ENCODE measurements at regions of chrX and their contacts with region 1.

Region 1: DNA sequence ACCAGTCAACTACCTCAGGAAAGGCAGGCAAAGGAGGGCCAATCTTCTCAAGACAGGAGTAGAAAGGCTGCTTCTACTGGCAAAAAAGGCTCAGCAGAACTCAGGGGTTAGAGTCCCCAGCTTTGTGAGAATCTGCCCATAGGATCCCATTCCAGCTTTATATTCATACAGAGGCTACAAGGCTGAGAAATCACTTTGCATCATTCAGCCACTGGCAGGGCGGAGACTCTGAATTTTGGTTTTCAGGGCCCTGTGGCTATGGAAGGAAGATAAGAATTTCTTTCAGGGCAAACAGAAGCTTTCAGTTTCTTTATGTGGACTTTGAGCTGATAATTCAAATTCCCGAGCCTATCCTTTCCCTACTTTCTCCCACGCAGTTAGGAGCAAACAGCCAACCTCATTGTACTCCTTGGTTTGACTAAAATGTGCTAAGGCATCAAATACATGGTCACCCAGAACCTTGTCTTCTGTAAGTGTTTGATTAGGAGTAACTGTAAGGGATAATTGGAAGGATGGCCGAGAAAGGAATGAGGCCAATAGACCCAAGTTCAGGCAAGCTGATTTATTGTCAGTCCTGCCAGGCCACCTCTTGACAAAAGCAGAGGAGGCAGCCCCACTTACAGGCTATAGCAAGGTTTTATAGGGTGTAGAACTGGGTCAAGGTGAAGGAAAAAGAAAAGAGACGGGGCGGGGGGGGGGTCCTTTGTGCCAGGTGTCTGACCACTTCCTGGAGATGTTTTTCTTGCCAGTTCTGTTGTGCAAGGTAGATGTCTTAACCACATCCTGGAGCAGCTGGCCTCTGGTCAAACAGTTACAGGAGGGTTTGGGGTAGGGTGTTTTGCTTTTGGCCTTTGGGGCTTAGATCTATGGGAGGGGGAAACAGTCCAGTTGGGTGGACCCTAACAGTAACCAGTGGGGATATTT is 165.3 kb upstream of the PPP1R2C start:
- DNase-seq: peak; percentile 41
- ATAC-seq: peak; percentile 75
- H3K4me3 ChIP-seq: peak overlapping the region in 1 of 5 experiments; percentile 19
- H3K4me3 Mint-ChIP-seq: peak overlapping the region; percentile 52
- H3K27ac ChIP-seq: peak overlapping the region; percentile 79 to 89
- H3K27ac Mint-ChIP-seq: peak overlapping the region; percentile 99
- H3K4me1 ChIP-seq: peaks cover 65% of the 10 kb centered on the region in 2 donors
- H3K4me1 Mint-ChIP-seq: peaks cover 73% of the 10 kb centered on the region
- H3K27me3 ChIP-seq: no peaks in the 10 kb centered on the region
- H3K27me3 Mint-ChIP-seq: no peaks in the 10 kb centered on the region
- CTCF ChIP-seq: no peak

Region 2: GRCh38 chrX:41796577-41796976 is 1146.7 kb before region 1 on chrX:
- CTCF ChIA-PET with region 1: interaction called, 25 read pairs
- POLR2A ChIA-PET with region 1: interaction called, 3 read pairs
- intact Hi-C with region 1: loop called (anchors 2 kb)
- DNase-seq: no peak
- ATAC-seq: no peak
- H3K4me3 ChIP-seq: no peak overlapping the region
- H3K4me3 Mint-ChIP-seq: no peak overlapping the region
- H3K27ac ChIP-seq: no peak overlapping the region
- H3K27ac Mint-ChIP-seq: peak overlapping the region; percentile 60
- H3K4me1 ChIP-seq: peaks cover 19 to 20% of the 10 kb centered on the region in 2 donors
- H3K4me1 Mint-ChIP-seq: peaks cover 30% of the 10 kb centered on the region
- H3K27me3 ChIP-seq: no peaks in the 10 kb centered on the region
- H3K27me3 Mint-ChIP-seq: no peaks in the 10 kb centered on the region
- CTCF ChIP-seq: no peak

Region 3: GRCh38 chrX:41923257-41923969 is 1019.9 kb before region 1 on chrX and contains the start of gene CASK:
- CTCF ChIA-PET with region 1: interaction called, 3 read pairs
- POLR2A ChIA-PET with region 1: no interaction called
- intact Hi-C with region 1: loop called (anchors 5 kb)
- DNase-seq: peak; percentile 89
- ATAC-seq: peak; percentile 88
- H3K4me3 ChIP-seq: peak within 1 kb of the TSS; percentile 51 to 79 (median 64)
- H3K4me3 Mint-ChIP-seq: peak within 1 kb of the TSS; percentile 95
- H3K27ac ChIP-seq: peak within 1 kb of the TSS; percentile 12 to 38
- H3K27ac Mint-ChIP-seq: peak within 1 kb of the TSS; percentile 86
- H3K4me1 ChIP-seq: peaks cover 3 to 11% of the 10 kb centered on the region in 2 donors
- H3K4me1 Mint-ChIP-seq: peaks cover 26% of the 10 kb centered on the region
- H3K27me3 ChIP-seq: no peaks in the 10 kb centered on the region
- H3K27me3 Mint-ChIP-seq: no peaks in the 10 kb centered on the region
- CTCF ChIP-seq: no peak
- total RNA-seq, gene CASK: 50.4 and 60.4 TPM in 2 replicates

Region 4: GRCh38 chrX:42930951-42931350 is 12.4 kb before region 1 on chrX:
- CTCF ChIA-PET with region 1: no interaction called
- POLR2A ChIA-PET with region 1: no interaction called
- intact Hi-C with region 1: no loop called
- DNase-seq: no peak
- ATAC-seq: no peak
- H3K4me3 ChIP-seq: no peak overlapping the region
- H3K4me3 Mint-ChIP-seq: no peak overlapping the region
- H3K27ac ChIP-seq: no peak overlapping the region
- H3K27ac Mint-ChIP-seq: no peak overlapping the region
- H3K4me1 ChIP-seq: peaks cover 24 to 28% of the 10 kb centered on the region in 2 donors
- H3K4me1 Mint-ChIP-seq: peaks cover 39% of the 10 kb centered on the region
- H3K27me3 ChIP-seq: no peaks in the 10 kb centered on the region
- H3K27me3 Mint-ChIP-seq: no peaks in the 10 kb centered on the region
- CTCF ChIP-seq: no peak

Region 5: DNA sequence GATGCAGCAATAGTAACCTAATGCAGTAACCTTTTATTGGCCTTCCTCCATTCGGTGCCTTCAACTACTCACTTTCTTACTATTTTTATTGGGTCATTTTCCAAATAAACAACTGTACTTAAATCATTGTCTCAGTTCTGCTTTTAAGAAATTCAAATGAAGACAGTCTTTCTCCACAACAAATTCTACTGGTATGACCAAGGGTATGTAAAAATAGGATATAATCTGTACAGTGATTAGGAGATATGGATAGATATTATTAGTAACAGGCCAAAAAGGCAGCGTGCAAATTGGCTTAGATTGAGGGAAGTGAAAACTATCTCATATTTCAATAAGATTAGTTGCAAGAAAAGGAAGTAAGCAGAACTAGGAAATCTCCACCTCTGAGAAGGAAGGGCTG is 12.0 kb after region 1 on chrX:
- CTCF ChIA-PET with region 1: interaction called, 4 read pairs
- POLR2A ChIA-PET with region 1: interaction called, 19 read pairs
- intact Hi-C with region 1: loop called (anchors 1 kb)
- DNase-seq: peak; percentile 38
- ATAC-seq: peak; percentile 76
- H3K4me3 ChIP-seq: no peak overlapping the region
- H3K4me3 Mint-ChIP-seq: peak overlapping the region; percentile 57
- H3K27ac ChIP-seq: peak overlapping the region; percentile 65 to 79
- H3K27ac Mint-ChIP-seq: peak overlapping the region; percentile 86
- H3K4me1 ChIP-seq: peaks cover 36 to 41% of the 10 kb centered on the region in 2 donors
- H3K4me1 Mint-ChIP-seq: peaks cover 37% of the 10 kb centered on the region
- H3K27me3 ChIP-seq: no peaks in the 10 kb centered on the region
- H3K27me3 Mint-ChIP-seq: no peaks in the 10 kb centered on the region
- CTCF ChIP-seq: no peak

Region 6: GRCh38 chrX:42992199-42992943 is 49.1 kb after region 1 on chrX:
- CTCF ChIA-PET with region 1: no interaction called
- POLR2A ChIA-PET with region 1: interaction called, 4 read pairs
- intact Hi-C with region 1: loop called (anchors 5 kb)
- DNase-seq: no peak
- ATAC-seq: no peak
- H3K4me3 ChIP-seq: no peak overlapping the region
- H3K4me3 Mint-ChIP-seq: no peak overlapping the region
- H3K27ac ChIP-seq: no peak overlapping the region
- H3K27ac Mint-ChIP-seq: peak overlapping the region; percentile 28
- H3K4me1 ChIP-seq: peaks cover 18 to 29% of the 10 kb centered on the region in 2 donors
- H3K4me1 Mint-ChIP-seq: peaks cover 48% of the 10 kb centered on the region
- H3K27me3 ChIP-seq: no peaks in the 10 kb centered on the region
- H3K27me3 Mint-ChIP-seq: no peaks in the 10 kb centered on the region
- CTCF ChIP-seq: no peak

Region 7: GRCh38 chrX:43349363-43349762 is 406.1 kb after region 1 on chrX:
- CTCF ChIA-PET with region 1: no interaction called
- POLR2A ChIA-PET with region 1: interaction called, 4 read pairs
- intact Hi-C with region 1: loop called (anchors 10 kb)
- DNase-seq: peak; percentile 26
- ATAC-seq: no peak
- H3K4me3 ChIP-seq: no peak overlapping the region
- H3K4me3 Mint-ChIP-seq: no peak overlapping the region
- H3K27ac ChIP-seq: no peak overlapping the region
- H3K27ac Mint-ChIP-seq: no peak overlapping the region
- H3K4me1 ChIP-seq: peaks cover 9% of the 10 kb centered on the region in 2 donors
- H3K4me1 Mint-ChIP-seq: peaks cover 33% of the 10 kb centered on the region
- H3K27me3 ChIP-seq: no peaks in the 10 kb centered on the region
- H3K27me3 Mint-ChIP-seq: no peaks in the 10 kb centered on the region
- CTCF ChIP-seq: peak; percentile 21